ENCODE measurements at regions of chr17 and their contacts with region 1.

Region 1: DNA sequence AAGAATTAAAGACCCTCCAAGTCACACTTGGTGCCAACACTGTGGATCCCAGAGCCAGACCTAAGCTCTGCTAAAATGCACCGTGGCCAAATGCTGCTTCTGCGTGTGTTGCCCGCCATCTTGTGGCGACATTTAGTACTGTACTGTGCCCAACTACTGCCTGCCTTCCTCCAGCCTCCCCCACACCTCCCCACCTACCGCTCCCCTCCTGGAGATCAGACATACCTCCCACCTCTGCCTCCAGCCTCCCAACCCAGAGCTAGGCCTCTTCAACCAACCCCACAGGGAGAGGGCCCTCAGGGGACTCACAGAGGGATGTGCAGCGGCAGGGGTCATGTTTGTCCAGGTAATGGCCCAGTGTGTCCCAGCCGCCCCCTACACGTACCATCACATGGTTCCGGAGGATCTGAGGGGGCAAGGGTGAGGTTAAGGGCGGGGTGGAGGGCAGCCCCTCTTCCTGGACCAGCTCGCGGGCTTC is 5.5 kb downstream of the GAS2L2 start:
- DNase-seq: peak; percentile 87
- ATAC-seq: peak; percentile 87
- H3K4me3 Mint-ChIP-seq: no peak overlapping the region
- H3K27ac Mint-ChIP-seq: no peak overlapping the region
- H3K4me1 Mint-ChIP-seq: peaks cover 9% of the 10 kb centered on the region
- H3K27me3 Mint-ChIP-seq: peaks cover 31% of the 10 kb centered on the region

Region 2: GRCh38 chr17:35660902-35661301 is 86.7 kb before region 1 on chr17:
- CTCF ChIA-PET with region 1: interaction called, 11 read pairs
- POLR2A ChIA-PET with region 1: no interaction called
- DNase-seq: no peak
- ATAC-seq: no peak
- H3K4me3 Mint-ChIP-seq: no peak overlapping the region
- H3K27ac Mint-ChIP-seq: no peak overlapping the region
- H3K4me1 Mint-ChIP-seq: no peaks in the 10 kb centered on the region
- H3K27me3 Mint-ChIP-seq: no peaks in the 10 kb centered on the region

Region 3: DNA sequence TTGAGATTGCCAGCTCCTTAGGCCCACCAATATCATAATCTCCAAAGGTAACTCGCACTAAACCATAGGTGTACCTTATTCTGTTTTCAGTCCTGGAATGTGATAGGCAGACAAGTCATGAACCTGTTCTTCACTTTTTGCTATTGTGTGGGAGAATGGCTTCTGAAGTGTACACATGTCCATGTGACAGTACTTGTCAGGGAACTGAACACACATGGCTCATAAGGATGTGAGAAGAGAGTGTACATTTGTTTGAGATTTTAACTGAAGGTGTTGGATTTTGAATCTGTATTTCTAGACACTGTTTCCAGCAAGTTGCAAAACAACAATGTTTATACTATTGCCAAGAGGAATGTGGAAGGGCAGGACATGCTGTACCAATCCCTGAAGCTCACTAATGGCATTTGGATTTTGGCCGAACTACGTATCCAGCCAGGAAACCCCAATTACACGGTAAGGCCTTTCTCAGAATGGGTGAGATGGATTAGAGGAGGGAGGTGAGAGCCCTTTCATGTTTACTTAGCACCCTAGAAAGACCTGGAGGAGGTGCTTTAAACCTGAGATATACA is 30.6 kb before region 1 on chr17:
- CTCF ChIA-PET with region 1: interaction called, 10 read pairs
- POLR2A ChIA-PET with region 1: no interaction called
- DNase-seq: no peak
- ATAC-seq: no peak
- H3K4me3 Mint-ChIP-seq: no peak overlapping the region
- H3K27ac Mint-ChIP-seq: no peak overlapping the region
- H3K4me1 Mint-ChIP-seq: no peaks in the 10 kb centered on the region
- H3K27me3 Mint-ChIP-seq: no peaks in the 10 kb centered on the region

Region 4: DNA sequence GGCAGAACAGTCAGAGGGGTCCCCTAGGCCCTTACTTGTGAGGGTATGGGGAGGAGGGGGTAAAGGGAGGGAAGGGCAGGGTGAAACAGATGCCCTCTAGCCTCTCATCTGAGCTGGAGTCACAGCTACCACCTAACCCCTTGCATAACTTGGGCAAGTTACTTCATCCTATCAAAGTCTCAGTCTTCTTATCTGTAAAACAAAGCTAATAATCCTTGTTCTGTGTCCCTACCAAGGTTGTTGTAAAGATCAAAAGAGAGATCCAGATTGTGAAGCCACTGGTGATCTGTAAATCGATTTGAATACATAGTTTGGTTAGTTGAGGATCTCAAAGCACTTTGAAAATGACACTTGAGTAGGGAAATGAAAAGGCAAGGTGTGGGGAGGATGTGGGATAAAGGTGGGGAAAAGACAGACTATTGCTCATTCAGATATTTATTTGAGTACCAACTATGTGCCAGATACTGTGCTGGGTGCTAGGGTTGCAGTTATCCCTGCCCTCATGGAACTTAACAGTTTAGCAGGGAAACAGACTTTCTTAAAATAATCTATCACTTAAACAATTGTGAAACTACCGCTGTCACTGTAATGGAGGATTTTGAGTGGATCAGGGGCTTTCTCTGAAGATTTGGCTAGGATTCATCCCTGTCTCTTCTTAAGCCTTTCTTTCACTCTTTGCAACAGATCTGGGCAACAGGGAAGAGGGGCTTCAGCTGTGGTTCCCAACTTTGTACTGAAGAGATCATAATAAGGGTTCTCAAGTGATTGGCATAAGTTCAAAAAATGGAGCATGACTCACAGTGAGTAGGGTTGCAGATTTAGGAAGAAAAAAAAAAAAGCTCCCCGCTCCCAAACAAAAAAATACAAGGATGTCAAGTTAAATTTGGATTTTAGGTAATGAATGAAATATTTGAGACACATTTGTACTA is 118.1 kb after region 1 on chr17:
- CTCF ChIA-PET with region 1: no interaction called
- POLR2A ChIA-PET with region 1: no interaction called
- DNase-seq: no peak
- ATAC-seq: no peak
- H3K4me3 Mint-ChIP-seq: no peak overlapping the region
- H3K27ac Mint-ChIP-seq: peak overlapping the region; percentile 16
- H3K4me1 Mint-ChIP-seq: peaks cover 38% of the 10 kb centered on the region
- H3K27me3 Mint-ChIP-seq: no peaks in the 10 kb centered on the region

Measured in activated CD8-positive, alpha-beta T cell treated with anti-CD3 and anti-CD28 coated beads, Interleukin-2, amount 10 ng/mL, durations not matched to agents 7 days and 5 days (primary cell).